Right ventricle myocardium superior (tissue), 1 donor: ENCODE measurements at regions of chr21 and their contacts with region 1.

Region 1: DNA sequence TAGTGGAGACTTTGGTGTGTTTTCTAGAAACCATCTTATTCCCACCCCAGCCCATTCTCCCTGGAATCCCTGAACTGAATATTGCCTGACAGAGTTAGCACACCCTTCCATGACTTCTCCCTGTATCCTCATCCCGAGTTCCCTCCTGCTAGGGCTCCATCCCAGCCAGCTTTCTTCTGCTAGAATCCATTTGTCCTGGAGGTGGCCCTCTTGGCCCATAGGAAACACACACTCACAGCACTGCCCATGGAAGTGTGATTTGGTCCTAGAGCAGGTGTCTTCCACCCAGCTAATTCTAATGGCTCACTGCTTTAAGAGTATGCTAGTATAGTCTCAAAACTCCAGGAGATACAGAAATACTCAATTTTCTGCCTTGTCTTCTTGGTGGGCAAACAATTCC is 4.1 kb downstream of the KRTAP15-1 start:
- DNase-seq: no peak
- ATAC-seq: no peak

Region 2: DNA sequence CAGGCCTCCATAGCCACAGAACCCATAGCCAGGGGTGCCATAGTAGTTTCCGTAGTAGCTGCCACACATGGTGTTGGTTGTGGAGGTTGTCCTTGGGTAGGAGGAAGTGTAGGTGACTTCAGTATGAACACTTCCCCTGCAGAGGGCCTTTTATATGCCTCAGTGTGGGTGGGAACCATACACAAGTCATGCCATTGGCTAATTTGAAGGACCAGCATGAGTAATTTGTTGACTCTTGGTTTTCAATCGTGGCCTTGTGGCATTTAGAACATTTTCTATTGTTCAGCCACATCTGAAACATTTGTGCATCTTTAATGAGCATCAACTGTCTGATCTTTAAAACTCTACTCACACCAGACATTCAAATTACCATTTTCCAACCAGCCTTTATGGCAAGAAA is 169.6 kb after region 1 on chr21 and contains the start of gene KRTAP6-1:
- intact Hi-C with region 1: no loop called
- DNase-seq: no peak
- ATAC-seq: no peak
- total RNA-seq, gene KRTAP6-1: not detected

Region 3: DNA sequence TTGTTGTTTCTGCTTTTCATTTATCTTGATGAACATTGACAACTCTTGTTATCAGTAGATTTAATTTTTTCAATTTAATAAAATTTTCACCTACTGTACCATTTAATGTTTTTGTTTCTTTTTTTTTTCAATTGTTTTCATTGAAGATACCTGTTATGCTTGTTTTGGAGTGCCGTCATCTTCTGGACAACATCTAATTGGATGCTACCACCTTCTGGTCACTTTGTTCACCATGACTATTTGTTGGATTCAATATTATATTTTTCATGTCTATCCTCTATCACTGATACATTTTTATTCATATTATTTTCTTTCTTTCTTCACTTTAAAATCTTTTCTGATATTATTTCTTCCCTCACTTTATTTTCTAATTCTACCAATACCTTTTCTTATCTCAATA is 288.8 kb after region 1 on chr21:
- intact Hi-C with region 1: loop called (anchors 10 kb)
- DNase-seq: no peak
- ATAC-seq: no peak